Aorta (tissue), 5 donors: ENCODE measurements at regions of chr6 and their contacts with region 1.

Region 1: DNA sequence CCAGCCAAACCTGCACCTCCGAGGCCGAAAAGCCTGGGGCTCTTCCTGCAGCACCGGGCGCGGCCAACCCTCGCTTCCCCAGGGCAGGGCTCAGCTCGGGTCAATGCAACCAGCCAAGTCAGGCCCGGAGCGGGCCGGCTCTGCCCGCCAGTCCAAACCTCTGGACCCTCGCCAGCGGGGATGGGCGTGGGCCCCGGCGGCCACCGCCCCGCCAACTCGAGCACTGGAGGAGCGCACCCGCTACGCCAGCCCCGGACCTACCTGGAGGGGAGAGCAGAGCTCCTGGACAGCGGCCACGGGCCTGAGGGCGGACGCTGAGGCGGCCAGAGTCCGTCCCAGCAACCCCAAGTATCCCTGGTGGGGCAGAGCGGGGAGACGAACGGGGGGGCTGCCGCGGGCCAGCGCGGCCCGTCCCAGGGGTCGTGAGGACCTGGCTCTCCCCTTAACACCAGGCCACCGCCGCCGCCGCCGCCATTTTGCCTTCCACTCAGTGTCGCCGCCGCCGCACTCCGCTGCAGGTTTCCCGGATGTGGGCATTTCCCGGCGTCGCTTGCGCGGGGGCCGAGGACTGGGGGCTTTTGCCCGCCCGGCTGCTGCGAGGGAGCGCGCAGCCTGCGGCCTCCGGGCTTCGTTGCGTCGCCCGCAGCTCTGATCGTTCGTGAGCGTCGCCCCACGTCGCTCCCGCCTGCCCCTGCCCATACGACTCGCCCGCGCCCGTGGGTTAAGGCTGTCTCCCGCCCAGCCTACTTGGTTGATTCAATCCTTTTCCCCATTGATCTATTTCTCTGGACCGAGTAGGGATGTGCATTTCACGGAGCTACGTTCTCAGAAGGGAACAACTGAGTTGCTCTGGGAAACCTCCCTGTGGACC is at the start of gene LATS1:
- DNase-seq: peak; percentile 95 to 97
- ATAC-seq: peak; percentile 96
- H3K4me3 ChIP-seq: peak within 1 kb of the TSS; percentile 58 to 69
- H3K27ac ChIP-seq: peak within 1 kb of the TSS; percentile 71 to 86
- H3K4me1 ChIP-seq: no peaks in the 10 kb centered on the region
- H3K27me3 ChIP-seq: no peaks in the 10 kb centered on the region
- total RNA-seq, gene LATS1: 31.5 to 39.2 TPM

Region 2: GRCh38 chr6:149648148-149649145 is 69.4 kb before region 1 on chr6 and contains the start of gene KATNA1:
- intact Hi-C with region 1: loop called in 1 of 2 experiments (anchors 10 kb)
- DNase-seq: peak; percentile 87 to 94
- ATAC-seq: peak; percentile 95
- H3K4me3 ChIP-seq: peak within 1 kb of the TSS; percentile 53 to 86
- H3K27ac ChIP-seq: peak within 1 kb of the TSS in 1 of 2 donors; percentile 2
- H3K4me1 ChIP-seq: no peaks in the 10 kb centered on the region
- H3K27me3 ChIP-seq: no peaks in the 10 kb centered on the region
- total RNA-seq, gene KATNA1: 15.9 to 18.5 TPM

Region 3: GRCh38 chr6:149806127-149806526 is 88.3 kb after region 1 on chr6:
- intact Hi-C with region 1: no loop called
- DNase-seq: no peak
- ATAC-seq: no peak
- H3K4me3 ChIP-seq: no peak overlapping the region
- H3K27ac ChIP-seq: no peak overlapping the region
- H3K4me1 ChIP-seq: no peaks in the 10 kb centered on the region
- H3K27me3 ChIP-seq: no peaks in the 10 kb centered on the region

Region 4: GRCh38 chr6:149941583-149942431 is 224.0 kb after region 1 on chr6 and contains the start of gene ULBP2:
- intact Hi-C with region 1: no loop called
- DNase-seq: peak; percentile 94 to 95
- ATAC-seq: peak; percentile 89
- H3K4me3 ChIP-seq: peak within 1 kb of the TSS in 1 of 2 donors; percentile 23
- H3K27ac ChIP-seq: no peak within 1 kb of the TSS
- H3K4me1 ChIP-seq: no peaks in the 10 kb centered on the region
- H3K27me3 ChIP-seq: no peaks in the 10 kb centered on the region
- total RNA-seq, gene ULBP2: 0.66 to 0.68 TPM